ENCODE measurements at regions of chr12 and their contacts with region 1.

Region 1: GRCh38 chr12:8108808-8109398 is 14.5 kb upstream of the CLEC4A start:
- DNase-seq: peak; percentile 71 to 80 (median 74)
- H3K4me3 ChIP-seq: no peak overlapping the region
- H3K4me3 Mint-ChIP-seq: peak overlapping the region in 1 of 8 donors; percentile 4
- H3K27ac ChIP-seq: no peak overlapping the region
- H3K27ac Mint-ChIP-seq: peak overlapping the region in 3 of 7 donors; percentile 2 to 58 (median 53)
- H3K4me1 ChIP-seq: no peaks in the 10 kb centered on the region
- H3K4me1 Mint-ChIP-seq: peaks cover 0 to 6% (median 4%) of the 10 kb centered on the region in 4 donors
- H3K27me3 ChIP-seq: no peaks in the 10 kb centered on the region
- H3K27me3 Mint-ChIP-seq: no peaks in the 10 kb centered on the region

Region 2: DNA sequence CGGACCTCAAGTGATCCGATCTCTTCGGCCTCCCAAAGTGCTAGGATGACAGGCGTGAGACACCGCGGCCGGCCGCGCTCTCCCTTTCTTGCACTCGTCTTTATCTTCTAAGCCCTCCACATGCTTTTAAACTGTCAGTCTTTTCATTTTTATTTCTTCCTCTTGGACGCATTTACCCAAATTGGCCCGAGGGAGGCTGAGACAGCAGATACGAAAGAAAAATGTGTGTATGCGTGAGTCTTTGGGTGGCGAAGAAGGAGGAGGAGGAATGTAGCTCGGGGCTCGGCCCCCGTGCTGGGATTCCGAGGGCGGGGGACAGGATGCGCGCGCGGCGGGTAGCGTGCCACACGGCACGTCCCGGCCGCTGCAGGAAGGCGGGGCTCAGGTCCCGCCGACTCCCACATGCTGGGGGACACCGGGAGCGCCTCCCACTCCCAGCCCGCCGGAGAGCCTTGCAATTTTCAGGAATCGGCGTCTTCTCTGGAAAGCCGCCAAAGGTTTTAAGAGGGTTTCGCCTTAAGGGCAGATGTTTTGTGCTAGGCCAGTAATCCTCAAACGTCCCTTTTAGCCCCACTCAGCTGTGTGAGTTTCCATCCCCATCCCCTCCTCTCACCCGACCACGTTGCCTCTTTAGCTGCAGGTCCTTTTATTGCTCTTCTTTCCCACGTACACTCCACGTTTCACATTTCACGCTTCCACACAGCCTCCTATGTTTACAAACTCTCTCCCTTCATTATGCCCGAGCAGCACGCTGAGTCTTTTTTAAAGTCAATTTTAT is 138.2 kb before region 1 on chr12:
- CTCF ChIA-PET with region 1: no interaction called
- POLR2A ChIA-PET with region 1: no interaction called
- intact Hi-C with region 1: no loop called
- DNase-seq: peak; percentile 83 to 90 (median 86)
- H3K4me3 ChIP-seq: peak overlapping the region; percentile 70 to 83
- H3K4me3 Mint-ChIP-seq: peak overlapping the region; percentile 82 to 95 (median 90)
- H3K27ac ChIP-seq: peak overlapping the region; percentile 93
- H3K27ac Mint-ChIP-seq: peak overlapping the region; percentile 92 to 100 (median 98)
- H3K4me1 ChIP-seq: peaks cover 34% of the 10 kb centered on the region
- H3K4me1 Mint-ChIP-seq: peaks cover 15 to 29% (median 24%) of the 10 kb centered on the region in 4 donors
- H3K27me3 ChIP-seq: no peaks in the 10 kb centered on the region
- H3K27me3 Mint-ChIP-seq: peaks cover 0 to 3% of the 10 kb centered on the region in 2 donors

Region 3: DNA sequence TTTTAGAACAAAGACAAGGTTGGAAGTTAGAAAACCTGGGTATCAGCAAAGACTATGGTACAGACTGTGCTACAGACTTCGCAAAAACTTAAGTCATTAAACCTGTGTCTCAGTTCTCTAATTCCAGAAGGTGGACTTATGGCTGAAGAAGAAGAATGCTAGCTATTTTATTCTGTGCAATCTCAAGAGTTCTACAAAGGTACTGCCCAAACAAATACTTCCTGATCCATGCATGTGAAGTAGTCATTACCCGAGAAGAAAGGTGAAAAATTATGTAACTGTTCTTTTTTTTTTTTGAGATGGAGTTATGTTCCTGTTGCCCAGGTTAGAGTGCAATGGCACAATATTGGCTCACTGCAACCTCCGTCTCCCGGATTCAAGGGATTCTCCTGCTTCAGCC is 127.5 kb before region 1 on chr12:
- CTCF ChIA-PET with region 1: no interaction called
- POLR2A ChIA-PET with region 1: no interaction called
- intact Hi-C with region 1: no loop called
- DNase-seq: no peak
- H3K4me3 ChIP-seq: no peak overlapping the region
- H3K4me3 Mint-ChIP-seq: no peak overlapping the region
- H3K27ac ChIP-seq: no peak overlapping the region
- H3K27ac Mint-ChIP-seq: peak overlapping the region in 1 of 7 donors; percentile 25
- H3K4me1 ChIP-seq: peaks cover under 1% of the 10 kb centered on the region
- H3K4me1 Mint-ChIP-seq: peaks cover 2 to 5% (median 4%) of the 10 kb centered on the region in 4 donors
- H3K27me3 ChIP-seq: no peaks in the 10 kb centered on the region
- H3K27me3 Mint-ChIP-seq: no peaks in the 10 kb centered on the region

Region 4: DNA sequence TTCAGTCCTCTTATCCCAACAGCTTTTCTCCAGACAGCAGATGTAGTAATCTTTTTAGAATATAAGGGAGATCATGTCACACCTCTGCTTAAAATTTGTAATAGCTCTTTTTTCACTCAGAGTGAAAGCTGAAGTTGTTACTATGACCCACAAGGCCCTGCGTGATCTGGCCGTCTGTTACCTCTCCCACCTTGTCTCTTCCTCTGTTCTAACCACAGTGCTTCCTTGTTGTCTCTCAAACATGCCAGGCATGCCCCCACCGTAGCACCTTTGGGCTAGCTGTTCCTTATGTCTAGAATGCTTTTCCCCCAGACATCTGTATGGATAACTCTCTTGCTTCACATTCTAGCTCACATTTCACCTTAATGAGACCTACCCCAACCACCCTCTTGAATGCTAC is 20.3 kb before region 1 on chr12:
- CTCF ChIA-PET with region 1: interaction called, 11 read pairs
- POLR2A ChIA-PET with region 1: interaction called, 3 read pairs
- intact Hi-C with region 1: no loop called
- DNase-seq: peak; percentile 35 to 65 (median 52)
- H3K4me3 ChIP-seq: peak overlapping the region in 1 of 2 donors; percentile 26
- H3K4me3 Mint-ChIP-seq: peak overlapping the region; percentile 70 to 86 (median 82)
- H3K27ac ChIP-seq: peak overlapping the region; percentile 58
- H3K27ac Mint-ChIP-seq: peak overlapping the region; percentile 85 to 96 (median 94)
- H3K4me1 ChIP-seq: peaks cover 60% of the 10 kb centered on the region
- H3K4me1 Mint-ChIP-seq: peaks cover 37 to 59% (median 41%) of the 10 kb centered on the region in 4 donors
- H3K27me3 ChIP-seq: no peaks in the 10 kb centered on the region
- H3K27me3 Mint-ChIP-seq: no peaks in the 10 kb centered on the region

Region 5: DNA sequence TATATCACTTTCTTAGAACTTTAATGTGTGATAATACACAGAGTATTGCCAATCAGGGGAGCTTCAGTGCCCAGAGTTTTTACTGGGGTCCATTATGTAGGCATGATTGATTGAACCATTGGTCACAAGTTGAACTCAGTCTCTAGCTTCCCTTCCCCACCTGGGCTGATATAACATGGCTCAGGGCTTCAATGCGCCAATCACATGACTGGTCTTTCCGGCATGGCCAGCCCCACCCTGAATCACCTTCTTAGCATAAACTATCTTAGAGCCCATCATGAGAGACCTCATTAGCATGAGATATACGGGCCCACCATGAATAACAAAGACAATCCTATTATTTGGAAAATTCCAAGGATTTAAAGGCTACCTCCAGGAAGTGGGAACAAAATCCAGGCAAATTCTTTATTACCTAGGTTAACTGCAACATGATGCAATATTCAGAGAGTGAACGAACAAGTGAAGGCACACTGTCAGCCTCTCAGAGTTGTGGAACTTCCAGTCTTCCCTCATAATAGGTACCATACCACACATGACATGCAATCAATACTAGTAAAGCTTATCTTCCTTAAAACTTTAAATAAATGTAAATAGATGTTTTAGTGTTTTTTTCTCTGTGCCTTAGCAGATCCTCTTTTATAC is 11.3 kb after region 1 on chr12:
- CTCF ChIA-PET with region 1: interaction called, 24 read pairs
- POLR2A ChIA-PET with region 1: no interaction called
- intact Hi-C with region 1: no loop called
- DNase-seq: no peak
- H3K4me3 ChIP-seq: no peak overlapping the region
- H3K4me3 Mint-ChIP-seq: no peak overlapping the region
- H3K27ac ChIP-seq: no peak overlapping the region
- H3K27ac Mint-ChIP-seq: no peak overlapping the region
- H3K4me1 ChIP-seq: no peaks in the 10 kb centered on the region
- H3K4me1 Mint-ChIP-seq: no peaks in the 10 kb centered on the region
- H3K27me3 ChIP-seq: no peaks in the 10 kb centered on the region
- H3K27me3 Mint-ChIP-seq: no peaks in the 10 kb centered on the region

Region 6: DNA sequence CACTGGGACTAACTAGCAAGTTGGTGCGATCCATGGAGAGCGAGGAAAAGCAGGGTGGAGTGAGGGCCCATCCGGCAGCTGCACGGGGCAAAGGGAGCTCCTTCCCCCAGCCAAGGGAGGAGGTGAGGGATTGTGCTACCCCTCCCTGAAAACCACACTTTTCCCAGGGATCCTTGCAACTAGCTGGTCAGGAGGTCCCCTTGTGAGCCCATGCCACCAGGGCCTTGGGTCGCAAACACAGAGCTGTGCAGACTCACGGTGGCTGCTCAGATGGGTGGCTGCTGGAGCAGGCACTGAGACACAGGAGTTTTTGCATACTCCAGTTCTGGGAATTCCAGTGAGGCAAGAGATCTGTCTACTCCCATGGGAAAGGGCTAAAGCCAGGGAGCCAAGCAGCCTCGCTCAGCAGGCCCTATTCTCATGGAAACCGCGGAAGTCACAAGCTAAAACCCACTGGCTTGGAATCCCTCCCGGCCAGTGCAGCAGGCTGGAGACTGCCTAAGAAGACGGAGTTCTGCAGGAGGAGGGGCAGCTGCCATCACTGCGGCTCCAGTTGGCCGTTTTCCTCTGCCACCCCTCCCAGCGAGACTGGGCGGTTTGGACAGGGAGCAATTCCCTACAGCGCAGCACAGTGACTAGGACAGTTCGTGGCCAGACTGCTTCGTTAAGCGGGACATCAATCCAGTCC is 37.0 kb after region 1 on chr12:
- CTCF ChIA-PET with region 1: no interaction called
- POLR2A ChIA-PET with region 1: no interaction called
- intact Hi-C with region 1: no loop called
- DNase-seq: peak in 1 of 5 donors; percentile 13
- H3K4me3 ChIP-seq: no peak overlapping the region
- H3K4me3 Mint-ChIP-seq: no peak overlapping the region
- H3K27ac ChIP-seq: no peak overlapping the region
- H3K27ac Mint-ChIP-seq: no peak overlapping the region
- H3K4me1 ChIP-seq: no peaks in the 10 kb centered on the region
- H3K4me1 Mint-ChIP-seq: no peaks in the 10 kb centered on the region
- H3K27me3 ChIP-seq: no peaks in the 10 kb centered on the region
- H3K27me3 Mint-ChIP-seq: peaks cover 6 to 7% of the 10 kb centered on the region in 2 donors

Region 7: DNA sequence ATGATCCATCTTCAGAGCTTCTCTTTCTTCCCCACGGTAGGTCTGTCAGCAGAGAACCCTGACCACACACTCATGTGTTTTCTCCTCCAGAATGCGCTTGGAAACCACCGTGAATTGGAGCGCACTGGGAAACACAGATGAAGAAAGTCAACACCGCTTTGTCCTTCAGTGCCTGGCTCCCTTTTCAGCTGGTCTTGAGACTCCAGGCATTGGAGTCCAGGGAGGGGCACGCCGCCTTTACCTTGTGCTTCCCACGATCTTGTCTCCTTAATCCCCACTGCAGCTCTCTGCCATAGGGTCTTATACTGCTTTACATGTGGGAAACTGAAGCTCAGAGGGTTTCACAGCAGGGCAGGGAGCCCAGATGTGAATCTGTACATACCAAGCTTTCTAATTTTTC is 117.5 kb after region 1 on chr12:
- CTCF ChIA-PET with region 1: interaction called, 33 read pairs
- POLR2A ChIA-PET with region 1: no interaction called
- intact Hi-C with region 1: no loop called
- DNase-seq: no peak
- H3K4me3 ChIP-seq: no peak overlapping the region
- H3K4me3 Mint-ChIP-seq: no peak overlapping the region
- H3K27ac ChIP-seq: no peak overlapping the region
- H3K27ac Mint-ChIP-seq: peak overlapping the region in 1 of 7 donors; percentile 19
- H3K4me1 ChIP-seq: no peaks in the 10 kb centered on the region
- H3K4me1 Mint-ChIP-seq: peaks cover 0 to 14% (median 0%) of the 10 kb centered on the region in 4 donors
- H3K27me3 ChIP-seq: no peaks in the 10 kb centered on the region
- H3K27me3 Mint-ChIP-seq: peaks cover 2 to 3% of the 10 kb centered on the region in 2 donors